Posterior cingulate gyrus (tissue), 11 donors: ENCODE measurements at regions of chr18 and their contacts with region 1.

Region 1: GRCh38 chr18:43563780-43564179 is 286.5 kb upstream of the SYT4 start:
- DNase-seq: peak in 2 of 10 donors; percentile 12 to 80

Region 2: DNA sequence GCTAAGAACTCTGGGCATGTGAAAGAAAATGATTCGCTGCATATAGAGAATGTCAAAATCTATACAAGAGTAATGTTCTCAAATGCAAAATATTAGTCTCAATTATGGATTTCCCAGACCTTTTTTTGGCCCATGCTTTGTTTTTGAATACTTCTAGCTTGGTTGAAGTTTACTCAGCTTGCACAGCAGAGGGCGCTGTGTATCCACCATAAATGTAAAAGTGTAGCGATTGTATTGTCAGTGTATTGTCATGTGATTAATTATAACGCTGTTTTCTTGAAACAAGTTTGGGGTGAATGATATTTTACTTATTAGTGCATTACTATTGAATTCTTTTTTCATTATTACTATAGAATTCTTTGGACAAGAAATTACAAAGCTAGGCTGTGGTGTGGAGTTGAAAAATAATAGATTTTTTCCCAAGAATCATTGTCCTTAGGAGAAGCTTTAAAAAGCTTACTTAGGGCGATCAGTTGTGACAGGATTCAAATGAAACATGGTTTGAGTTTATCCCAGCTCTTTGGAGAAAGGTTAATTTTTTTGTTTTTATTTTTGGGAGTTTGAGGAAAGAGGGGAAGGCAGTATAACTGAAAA is 1510.5 kb before region 1 on chr18:
- intact Hi-C with region 1: loop called (anchors 10 kb)
- DNase-seq: peak in 7 of 10 donors; percentile 22 to 87 (median 54)

Region 3: GRCh38 chr18:42471885-42472284 is 1091.9 kb before region 1 on chr18:
- intact Hi-C with region 1: no loop called
- DNase-seq: no peak

Region 4: DNA sequence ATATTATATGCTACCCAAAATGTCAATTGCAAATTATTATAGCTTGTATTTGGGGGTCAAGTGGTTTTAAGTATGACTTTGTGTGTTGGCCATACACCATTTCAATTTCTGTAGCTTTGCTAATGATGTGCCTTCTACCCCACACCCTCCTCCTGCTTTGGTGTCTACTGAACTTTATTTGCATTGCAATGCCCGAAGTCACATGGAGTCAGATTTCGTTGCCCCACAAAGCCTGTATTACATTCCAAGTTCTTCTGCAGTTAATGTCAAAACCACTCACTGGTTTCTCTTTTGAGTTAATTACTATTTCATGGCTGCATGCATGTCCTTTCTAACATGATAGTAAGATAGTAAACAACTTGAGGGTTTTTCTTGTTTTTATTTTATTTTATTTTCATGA is 977.2 kb before region 1 on chr18:
- intact Hi-C with region 1: loop called (anchors 10 kb)
- DNase-seq: no peak

Region 5: GRCh38 chr18:43148231-43148630 is 415.5 kb before region 1 on chr18:
- intact Hi-C with region 1: no loop called
- DNase-seq: no peak

Region 6: GRCh38 chr18:43751203-43751602 is 187.4 kb after region 1 on chr18:
- intact Hi-C with region 1: no loop called
- DNase-seq: no peak

Region 7: GRCh38 chr18:43961722-43962121 is 397.9 kb after region 1 on chr18:
- intact Hi-C with region 1: no loop called
- DNase-seq: no peak